ENCODE measurements at regions of chr9 and their contacts with region 1.

Region 1: GRCh38 chr9:115013998-115014397 is 83.6 kb upstream of the TNFSF8 start:
- DNase-seq: peak; percentile 68 to 89 (median 74)
- ATAC-seq: peak; percentile 82
- H3K4me3 ChIP-seq: no peak overlapping the region
- H3K4me3 Mint-ChIP-seq: no peak overlapping the region
- H3K27ac ChIP-seq: no peak overlapping the region
- H3K27ac Mint-ChIP-seq: no peak overlapping the region
- H3K4me1 ChIP-seq: peaks cover 9% of the 10 kb centered on the region
- H3K4me1 Mint-ChIP-seq: peaks cover 13% of the 10 kb centered on the region
- H3K27me3 ChIP-seq: no peaks in the 10 kb centered on the region
- H3K27me3 Mint-ChIP-seq: no peaks in the 10 kb centered on the region
- CTCF ChIP-seq: peak; percentile 82

Region 2: GRCh38 chr9:114487607-114488300 is 526.2 kb before region 1 on chr9:
- CTCF ChIA-PET with region 1: no interaction called
- POLR2A ChIA-PET with region 1: no interaction called
- intact Hi-C with region 1: loop called in 1 of 2 experiments (anchors 1 kb)
- DNase-seq: peak; percentile 32 to 86 (median 48)
- ATAC-seq: peak; percentile 90
- H3K4me3 ChIP-seq: no peak overlapping the region
- H3K4me3 Mint-ChIP-seq: no peak overlapping the region
- H3K27ac ChIP-seq: no peak overlapping the region
- H3K27ac Mint-ChIP-seq: no peak overlapping the region
- H3K4me1 ChIP-seq: peaks cover 22% of the 10 kb centered on the region
- H3K4me1 Mint-ChIP-seq: peaks cover 11% of the 10 kb centered on the region
- H3K27me3 ChIP-seq: no peaks in the 10 kb centered on the region
- H3K27me3 Mint-ChIP-seq: no peaks in the 10 kb centered on the region
- CTCF ChIP-seq: peak; percentile 85

Region 3: DNA sequence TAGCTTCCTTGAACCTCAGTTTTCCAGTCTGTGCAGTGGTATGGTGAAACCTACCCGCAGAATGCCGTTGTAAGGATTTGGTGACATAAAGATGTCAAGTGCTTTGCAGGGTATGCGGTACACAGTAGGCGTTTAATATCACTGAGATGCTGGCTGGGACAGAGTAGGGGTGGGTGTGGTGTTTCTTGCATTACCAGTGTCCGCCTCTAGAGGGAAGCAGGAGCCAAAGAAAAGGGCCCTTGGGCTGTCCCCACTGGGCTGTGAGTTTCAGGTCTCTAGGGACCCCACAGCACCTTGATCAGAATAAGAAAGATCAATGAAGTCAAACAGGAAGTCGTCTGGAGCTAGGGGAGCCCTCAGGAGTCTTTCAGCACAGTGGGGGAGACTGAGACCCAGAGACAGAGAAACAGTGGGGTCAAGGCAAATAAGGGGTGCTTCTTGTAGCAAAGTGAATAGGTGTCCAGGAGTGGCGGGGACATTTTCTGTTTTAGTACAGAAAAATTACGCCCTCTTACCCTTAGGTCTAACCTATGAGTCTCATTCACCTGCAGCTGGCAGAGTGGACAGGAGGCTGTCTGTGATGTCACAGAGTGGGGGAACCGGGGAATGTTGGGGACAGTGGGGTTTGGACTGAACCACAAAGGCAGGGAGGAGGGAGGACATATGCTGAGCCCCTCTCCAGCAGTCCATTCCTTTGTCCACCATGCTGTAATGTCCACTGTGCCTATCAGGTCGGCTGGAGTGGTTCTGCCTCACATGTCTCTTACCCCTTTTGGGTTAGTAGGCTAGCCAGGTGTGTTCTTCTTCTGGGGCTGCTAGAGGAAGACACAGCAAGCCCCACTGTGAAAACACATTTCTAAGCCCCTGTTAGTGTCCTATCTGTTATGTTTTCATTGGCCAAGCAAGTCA is 351.7 kb before region 1 on chr9:
- CTCF ChIA-PET with region 1: no interaction called
- POLR2A ChIA-PET with region 1: no interaction called
- intact Hi-C with region 1: loop called (anchors 1 to 5 kb)
- DNase-seq: peak; percentile 34 to 76 (median 50)
- ATAC-seq: peak; percentile 86
- H3K4me3 ChIP-seq: no peak overlapping the region
- H3K4me3 Mint-ChIP-seq: no peak overlapping the region
- H3K27ac ChIP-seq: no peak overlapping the region
- H3K27ac Mint-ChIP-seq: no peak overlapping the region
- H3K4me1 ChIP-seq: no peaks in the 10 kb centered on the region
- H3K4me1 Mint-ChIP-seq: no peaks in the 10 kb centered on the region
- H3K27me3 ChIP-seq: peaks cover 0 to 5% of the 10 kb centered on the region in 2 experiments
- H3K27me3 Mint-ChIP-seq: peaks cover 13% of the 10 kb centered on the region
- CTCF ChIP-seq: peak; percentile 78

Region 4: GRCh38 chr9:114738581-114739316 is 275.2 kb before region 1 on chr9:
- CTCF ChIA-PET with region 1: interaction called, 8 read pairs
- POLR2A ChIA-PET with region 1: interaction called, 5 read pairs
- intact Hi-C with region 1: loop called (anchors 1 kb)
- DNase-seq: peak; percentile 53 to 89 (median 64)
- ATAC-seq: peak; percentile 88
- H3K4me3 ChIP-seq: no peak overlapping the region
- H3K4me3 Mint-ChIP-seq: peak overlapping the region; percentile 18
- H3K27ac ChIP-seq: no peak overlapping the region
- H3K27ac Mint-ChIP-seq: peak overlapping the region; percentile 85
- H3K4me1 ChIP-seq: peaks cover 40% of the 10 kb centered on the region
- H3K4me1 Mint-ChIP-seq: peaks cover 39% of the 10 kb centered on the region
- H3K27me3 ChIP-seq: no peaks in the 10 kb centered on the region
- H3K27me3 Mint-ChIP-seq: no peaks in the 10 kb centered on the region
- CTCF ChIP-seq: peak; percentile 88

Region 5: DNA sequence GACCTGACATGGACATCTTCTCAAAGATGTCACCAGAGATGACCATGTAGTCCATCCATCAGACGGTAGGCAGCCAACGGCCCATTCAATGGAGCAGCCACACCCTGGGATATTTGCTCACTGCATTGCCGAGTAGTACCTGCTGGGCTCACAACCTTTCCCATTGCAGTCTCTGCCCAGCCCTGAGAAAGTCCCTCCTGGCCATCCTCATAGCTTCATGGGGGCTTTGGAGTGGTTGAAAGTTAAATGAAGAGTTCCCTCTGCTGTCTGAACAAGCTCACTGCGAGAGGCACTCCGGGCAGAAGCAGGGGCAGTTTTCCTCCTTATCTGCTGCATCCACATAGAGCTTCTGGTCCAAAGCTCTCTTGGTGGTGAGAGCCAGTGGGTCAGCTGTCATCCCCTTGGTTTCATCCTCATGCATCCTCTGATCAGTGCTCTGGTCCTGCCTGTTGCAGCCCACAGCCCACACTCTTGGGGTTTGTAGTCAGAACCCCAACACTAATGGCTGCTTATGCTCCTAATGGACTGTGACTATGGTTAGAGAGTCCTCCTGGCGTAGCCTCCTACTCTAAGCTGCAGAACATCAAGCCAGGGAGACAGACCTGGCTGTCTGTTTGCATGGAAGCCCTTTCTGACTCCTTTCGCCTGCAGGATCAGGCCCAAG is 107.0 kb before region 1 on chr9:
- CTCF ChIA-PET with region 1: interaction called, 6 read pairs
- POLR2A ChIA-PET with region 1: interaction called, 4 read pairs
- intact Hi-C with region 1: loop called (anchors 1 to 5 kb)
- DNase-seq: peak in 4 of 14 experiments; percentile 34 to 66 (median 56)
- ATAC-seq: no peak
- H3K4me3 ChIP-seq: no peak overlapping the region
- H3K4me3 Mint-ChIP-seq: no peak overlapping the region
- H3K27ac ChIP-seq: peak overlapping the region in 1 of 2 donors; percentile 7
- H3K27ac Mint-ChIP-seq: peak overlapping the region; percentile 85
- H3K4me1 ChIP-seq: peaks cover 84% of the 10 kb centered on the region
- H3K4me1 Mint-ChIP-seq: peaks cover 55% of the 10 kb centered on the region
- H3K27me3 ChIP-seq: no peaks in the 10 kb centered on the region
- H3K27me3 Mint-ChIP-seq: no peaks in the 10 kb centered on the region
- CTCF ChIP-seq: peak; percentile 69

Region 6: GRCh38 chr9:115032296-115032695 is 18.3 kb after region 1 on chr9:
- CTCF ChIA-PET with region 1: no interaction called
- POLR2A ChIA-PET with region 1: no interaction called
- intact Hi-C with region 1: no loop called
- DNase-seq: no peak
- ATAC-seq: no peak
- H3K4me3 ChIP-seq: no peak overlapping the region
- H3K4me3 Mint-ChIP-seq: no peak overlapping the region
- H3K27ac ChIP-seq: no peak overlapping the region
- H3K27ac Mint-ChIP-seq: no peak overlapping the region
- H3K4me1 ChIP-seq: peaks cover 9% of the 10 kb centered on the region
- H3K4me1 Mint-ChIP-seq: peaks cover 7% of the 10 kb centered on the region
- H3K27me3 ChIP-seq: no peaks in the 10 kb centered on the region
- H3K27me3 Mint-ChIP-seq: peaks cover 7% of the 10 kb centered on the region
- CTCF ChIP-seq: no peak

Region 7: GRCh38 chr9:115088860-115089259 is 74.9 kb after region 1 on chr9:
- CTCF ChIA-PET with region 1: no interaction called
- POLR2A ChIA-PET with region 1: no interaction called
- intact Hi-C with region 1: no loop called
- DNase-seq: no peak
- ATAC-seq: no peak
- H3K4me3 ChIP-seq: no peak overlapping the region
- H3K4me3 Mint-ChIP-seq: no peak overlapping the region
- H3K27ac ChIP-seq: no peak overlapping the region
- H3K27ac Mint-ChIP-seq: no peak overlapping the region
- H3K4me1 ChIP-seq: no peaks in the 10 kb centered on the region
- H3K4me1 Mint-ChIP-seq: no peaks in the 10 kb centered on the region
- H3K27me3 ChIP-seq: peaks cover 2 to 4% of the 10 kb centered on the region in 2 experiments
- H3K27me3 Mint-ChIP-seq: peaks cover 10% of the 10 kb centered on the region
- CTCF ChIP-seq: no peak

Region 8: GRCh38 chr9:115524453-115525059 is 510.6 kb after region 1 on chr9:
- CTCF ChIA-PET with region 1: no interaction called
- POLR2A ChIA-PET with region 1: no interaction called
- intact Hi-C with region 1: loop called in 1 of 2 experiments (anchors 10 kb)
- DNase-seq: peak in 4 of 14 experiments; percentile 11 to 47 (median 40)
- ATAC-seq: no peak
- H3K4me3 ChIP-seq: no peak overlapping the region
- H3K4me3 Mint-ChIP-seq: no peak overlapping the region
- H3K27ac ChIP-seq: no peak overlapping the region
- H3K27ac Mint-ChIP-seq: no peak overlapping the region
- H3K4me1 ChIP-seq: no peaks in the 10 kb centered on the region
- H3K4me1 Mint-ChIP-seq: no peaks in the 10 kb centered on the region
- H3K27me3 ChIP-seq: peaks cover 0 to 11% of the 10 kb centered on the region in 2 experiments
- H3K27me3 Mint-ChIP-seq: peaks cover 44% of the 10 kb centered on the region
- CTCF ChIP-seq: peak; percentile 33